AG04450 (cell line): ENCODE measurements at regions of chr22 and their contacts with region 1.

Region 1: GRCh38 chr22:22130953-22131608 is 113.5 kb upstream of the VPREB1 start:
- DNase-seq: no peak
- H3K4me3 ChIP-seq: no peak overlapping the region
- H3K27ac ChIP-seq: no peak overlapping the region
- H3K27me3 ChIP-seq: peaks cover 25% of the 10 kb centered on the region
- CTCF ChIP-seq: no peak

Region 2: DNA sequence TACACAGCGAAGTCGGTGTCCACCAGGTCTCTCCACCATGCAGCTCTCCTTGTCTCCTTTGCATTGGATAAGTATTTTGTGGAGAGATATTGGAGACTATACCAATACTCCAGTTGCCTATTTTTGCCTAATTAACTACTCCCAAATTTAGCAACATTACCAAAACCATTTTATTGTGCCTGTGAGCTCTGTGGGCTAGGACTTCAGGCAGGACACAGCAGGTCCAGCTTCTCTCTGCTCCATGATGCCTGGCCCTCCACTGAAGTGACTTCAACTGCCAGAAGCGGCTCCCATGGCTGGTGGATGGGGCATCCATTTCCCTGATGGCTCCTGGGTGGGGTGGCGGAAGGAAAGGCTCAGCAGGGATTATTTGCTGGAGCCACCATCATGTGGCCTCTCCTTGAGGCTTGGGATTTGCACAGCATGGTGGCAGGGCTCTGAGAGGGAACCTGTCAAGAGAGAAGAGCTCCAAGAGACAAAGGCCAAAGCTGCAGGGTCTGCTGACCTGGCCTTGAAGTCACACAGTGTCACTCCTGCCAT is 226.8 kb before region 1 on chr22:
- CTCF ChIA-PET with region 1: no interaction called
- POLR2A ChIA-PET with region 1: no interaction called
- DNase-seq: no peak
- H3K4me3 ChIP-seq: no peak overlapping the region
- H3K27ac ChIP-seq: no peak overlapping the region
- H3K27me3 ChIP-seq: no peaks in the 10 kb centered on the region
- CTCF ChIP-seq: no peak

Region 3: GRCh38 chr22:22144858-22145257 is 13.8 kb after region 1 on chr22:
- CTCF ChIA-PET with region 1: interaction called, 23 read pairs
- POLR2A ChIA-PET with region 1: no interaction called
- DNase-seq: no peak
- H3K4me3 ChIP-seq: no peak overlapping the region
- H3K27ac ChIP-seq: no peak overlapping the region
- H3K27me3 ChIP-seq: peaks cover 27% of the 10 kb centered on the region
- CTCF ChIP-seq: peak; percentile 55

Region 4: GRCh38 chr22:22219140-22219996 is 88.3 kb after region 1 on chr22:
- CTCF ChIA-PET with region 1: no interaction called
- POLR2A ChIA-PET with region 1: no interaction called
- DNase-seq: no peak
- H3K4me3 ChIP-seq: no peak overlapping the region
- H3K27ac ChIP-seq: no peak overlapping the region
- H3K27me3 ChIP-seq: peaks cover 9% of the 10 kb centered on the region
- CTCF ChIP-seq: no peak